Dendritic cell treated with granulocyte-macrophage colony-stimulating factor and Interleukin-4, amounts not matched to agents 40 ng/mL and 50 ng/mL, for 4 days (primary cell): ENCODE measurements at regions of chr12 and their contacts with region 1.

Region 1: DNA sequence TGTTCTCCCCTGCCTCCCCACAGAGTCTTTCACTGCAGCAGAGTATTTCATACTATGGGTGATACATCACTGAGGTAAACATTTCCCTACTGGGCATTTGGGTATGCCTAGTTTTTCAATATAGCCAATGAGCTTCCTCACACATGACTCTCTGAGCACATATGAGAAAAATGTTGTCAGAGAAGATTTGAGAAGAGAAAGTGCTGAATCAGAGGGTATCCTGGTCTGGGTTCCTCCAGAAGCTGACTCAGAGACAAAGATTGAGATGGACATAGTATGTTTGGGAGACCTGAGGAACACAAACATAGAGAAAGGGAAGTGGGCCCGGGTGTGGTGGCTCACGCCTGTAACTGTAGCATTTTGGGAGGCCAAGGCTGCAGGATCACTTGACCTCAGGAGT is 12.6 kb downstream of the SLC8B1 start:
- H3K4me3 Mint-ChIP-seq: no peak overlapping the region
- H3K27ac Mint-ChIP-seq: peak overlapping the region; percentile 88
- H3K4me1 Mint-ChIP-seq: peaks cover 34% of the 10 kb centered on the region
- H3K27me3 Mint-ChIP-seq: no peaks in the 10 kb centered on the region

Region 2: GRCh38 chr12:113358381-113359132 is 36.2 kb after region 1 on chr12 and contains the start of gene PLBD2:
- intact Hi-C with region 1: loop called (anchors 1 kb)
- H3K4me3 Mint-ChIP-seq: peak within 1 kb of the TSS; percentile 90
- H3K27ac Mint-ChIP-seq: peak within 1 kb of the TSS; percentile 84
- H3K4me1 Mint-ChIP-seq: peaks cover 33% of the 10 kb centered on the region
- H3K27me3 Mint-ChIP-seq: no peaks in the 10 kb centered on the region

Region 3: DNA sequence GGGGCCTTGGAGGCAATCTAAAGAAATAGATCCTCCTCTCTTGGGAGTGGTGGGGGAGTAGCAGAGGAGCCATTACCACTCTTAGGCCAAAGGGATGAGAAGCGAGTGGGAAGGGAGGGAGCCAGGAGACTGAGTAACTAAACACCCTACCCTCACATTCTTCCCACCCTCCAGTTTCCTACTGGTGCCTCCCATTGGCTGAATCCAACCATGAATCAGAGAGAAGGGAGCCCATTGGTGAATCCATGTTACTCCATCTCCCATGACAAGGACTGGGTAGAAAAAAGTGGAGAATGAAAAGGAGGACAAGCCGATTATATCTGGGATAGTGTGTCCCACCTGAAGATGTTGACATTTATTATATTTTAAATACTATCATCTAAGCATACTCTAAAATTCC is 226.1 kb after region 1 on chr12:
- intact Hi-C with region 1: no loop called
- H3K4me3 Mint-ChIP-seq: no peak overlapping the region
- H3K27ac Mint-ChIP-seq: no peak overlapping the region
- H3K4me1 Mint-ChIP-seq: peaks cover 6% of the 10 kb centered on the region
- H3K27me3 Mint-ChIP-seq: peaks cover 26% of the 10 kb centered on the region